Activated naive CD4-positive, alpha-beta T cell treated with anti-CD3 and anti-CD28 coated beads, Interleukin-2, amount 10 ng/mL, durations not matched to agents 7 days and 5 days (primary cell): ENCODE measurements at regions of chr20 and their contacts with region 1.

Region 1: DNA sequence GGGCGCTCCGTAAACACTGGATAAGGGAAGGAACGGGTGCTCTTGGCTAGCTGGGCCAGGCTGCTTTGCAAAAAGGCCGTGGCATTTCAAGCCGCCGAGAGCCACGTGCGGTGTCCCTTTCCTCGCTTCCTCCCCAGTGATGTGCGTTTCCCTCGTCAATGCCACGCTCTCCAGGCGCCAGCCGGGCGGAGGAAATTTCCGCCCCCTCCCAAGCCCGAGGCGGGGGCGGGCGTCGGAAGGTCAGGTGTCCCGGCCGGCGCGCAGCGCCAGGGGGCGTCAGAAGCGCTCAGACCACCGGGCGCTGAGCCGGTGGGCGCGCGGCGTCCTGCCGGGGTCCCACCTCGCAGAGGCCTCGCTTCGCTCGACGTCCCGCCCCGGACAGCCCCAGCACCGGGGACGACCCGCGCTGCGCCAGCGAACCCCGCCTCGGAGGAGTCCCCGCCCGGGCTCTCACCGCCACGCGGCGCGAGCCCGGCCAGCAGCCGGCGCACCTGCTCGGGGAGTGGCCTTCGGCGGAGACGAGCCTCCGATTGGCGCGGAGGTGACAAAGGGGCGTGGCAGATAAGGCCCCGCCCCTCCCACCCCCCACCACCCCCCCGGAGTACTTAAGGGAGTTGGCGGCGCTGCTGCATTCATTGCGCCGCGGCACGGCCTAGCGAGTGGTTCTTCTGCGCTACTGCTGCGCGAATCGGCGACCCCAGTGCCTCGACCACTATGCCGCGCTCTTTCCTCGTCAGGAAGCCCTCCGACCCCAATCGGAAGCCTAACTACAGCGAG is at the start of gene SNAI1:
- DNase-seq: peak; percentile 88
- H3K4me3 Mint-ChIP-seq: peak within 1 kb of the TSS; percentile 44
- H3K27ac Mint-ChIP-seq: no peak within 1 kb of the TSS
- H3K4me1 Mint-ChIP-seq: peaks cover 30% of the 10 kb centered on the region
- H3K27me3 Mint-ChIP-seq: peaks cover 69% of the 10 kb centered on the region

Region 2: GRCh38 chr20:49964964-49965780 is 17.4 kb before region 1 on chr20:
- CTCF ChIA-PET with region 1: interaction called, 15 read pairs
- DNase-seq: peak; percentile 43
- H3K4me3 Mint-ChIP-seq: no peak overlapping the region
- H3K27ac Mint-ChIP-seq: no peak overlapping the region
- H3K4me1 Mint-ChIP-seq: no peaks in the 10 kb centered on the region
- H3K27me3 Mint-ChIP-seq: no peaks in the 10 kb centered on the region

Region 3: GRCh38 chr20:50061742-50062516 is 79.4 kb after region 1 on chr20:
- CTCF ChIA-PET with region 1: interaction called, 317 read pairs
- DNase-seq: no peak
- H3K4me3 Mint-ChIP-seq: no peak overlapping the region
- H3K27ac Mint-ChIP-seq: no peak overlapping the region
- H3K4me1 Mint-ChIP-seq: no peaks in the 10 kb centered on the region
- H3K27me3 Mint-ChIP-seq: no peaks in the 10 kb centered on the region

Region 4: GRCh38 chr20:50070991-50071888 is 88.7 kb after region 1 on chr20:
- CTCF ChIA-PET with region 1: interaction called, 317 read pairs
- DNase-seq: peak; percentile 92
- H3K4me3 Mint-ChIP-seq: peak overlapping the region; percentile 44
- H3K27ac Mint-ChIP-seq: no peak overlapping the region
- H3K4me1 Mint-ChIP-seq: peaks cover 6% of the 10 kb centered on the region
- H3K27me3 Mint-ChIP-seq: peaks cover 21% of the 10 kb centered on the region

Region 5: DNA sequence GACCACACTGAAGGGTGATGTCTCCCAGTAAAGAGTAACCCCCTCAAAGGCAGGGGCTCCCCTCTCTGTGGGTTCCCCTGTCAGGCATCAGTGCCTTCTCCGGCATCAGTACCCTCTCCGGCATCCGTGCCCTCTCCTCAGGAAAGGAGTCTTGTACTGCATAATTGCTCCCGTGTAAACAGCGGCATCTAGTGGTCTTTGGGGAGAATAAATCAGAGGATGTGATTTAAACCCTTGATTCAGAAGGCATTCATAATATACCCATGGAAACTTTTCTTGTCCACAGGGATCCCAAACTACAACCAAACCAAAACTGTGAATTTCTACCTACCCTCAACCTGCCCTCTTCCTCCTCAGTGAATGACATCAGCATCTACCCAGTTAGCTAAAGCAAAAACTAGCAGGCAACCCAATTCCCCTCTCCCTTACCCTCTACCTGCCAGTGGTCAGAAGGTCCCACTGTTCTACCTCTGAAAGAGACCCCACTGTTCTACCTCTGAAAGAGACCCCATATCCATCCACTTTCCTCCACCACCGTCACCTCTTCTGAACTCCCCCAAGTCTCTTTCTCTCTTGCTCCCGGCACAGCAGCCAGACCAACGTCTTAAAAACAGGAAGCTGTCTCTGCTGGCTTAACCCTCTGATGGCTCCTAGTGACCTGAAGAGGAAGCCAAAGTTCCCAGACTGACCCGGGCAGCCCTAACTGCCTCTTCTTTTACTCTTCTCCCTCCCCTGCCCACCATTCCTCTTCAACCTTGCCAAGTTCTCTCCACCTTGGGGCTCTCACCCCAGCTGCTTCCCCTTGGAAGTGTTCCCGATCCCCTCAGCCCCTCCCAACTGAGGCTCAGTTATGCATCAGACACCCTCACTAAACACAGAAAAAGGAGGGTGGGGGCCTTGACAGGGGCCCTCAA is 103.2 kb after region 1 on chr20:
- CTCF ChIA-PET with region 1: interaction called, 17 read pairs
- DNase-seq: peak; percentile 55
- H3K4me3 Mint-ChIP-seq: peak overlapping the region; percentile 53
- H3K27ac Mint-ChIP-seq: peak overlapping the region; percentile 39
- H3K4me1 Mint-ChIP-seq: peaks cover 16% of the 10 kb centered on the region
- H3K27me3 Mint-ChIP-seq: no peaks in the 10 kb centered on the region

Region 6: GRCh38 chr20:50165684-50166554 is 183.4 kb after region 1 on chr20:
- CTCF ChIA-PET with region 1: interaction called, 33 read pairs
- DNase-seq: peak; percentile 80
- H3K4me3 Mint-ChIP-seq: peak overlapping the region; percentile 55
- H3K27ac Mint-ChIP-seq: peak overlapping the region; percentile 74
- H3K4me1 Mint-ChIP-seq: peaks cover 14% of the 10 kb centered on the region
- H3K27me3 Mint-ChIP-seq: peaks cover 5% of the 10 kb centered on the region

Region 7: DNA sequence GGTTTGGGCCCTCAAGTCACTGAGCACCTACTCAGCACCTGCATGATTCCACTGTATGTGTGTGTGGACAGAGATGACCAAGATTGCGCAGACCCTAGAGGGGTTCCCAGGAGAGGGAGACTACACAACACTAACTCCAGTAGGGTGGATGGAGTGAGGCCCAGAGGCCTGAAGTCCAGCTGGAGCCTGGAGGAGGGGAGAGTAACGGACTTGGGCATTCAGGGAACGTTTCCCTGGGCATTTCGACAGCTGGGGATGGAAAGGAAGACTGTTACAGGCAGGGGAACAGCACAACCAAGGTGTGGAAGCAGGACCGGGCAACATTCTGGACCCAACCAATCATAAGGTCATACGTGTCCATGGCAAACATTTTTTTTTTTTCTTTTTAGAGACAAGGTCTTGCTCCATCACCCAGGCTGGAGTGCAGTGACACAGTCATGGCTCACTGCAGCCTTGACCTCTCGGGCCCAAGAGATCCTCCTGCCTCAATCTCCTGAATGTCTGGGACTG is 197.0 kb after region 1 on chr20:
- CTCF ChIA-PET with region 1: interaction called, 13 read pairs
- DNase-seq: no peak
- H3K4me3 Mint-ChIP-seq: no peak overlapping the region
- H3K27ac Mint-ChIP-seq: no peak overlapping the region
- H3K4me1 Mint-ChIP-seq: no peaks in the 10 kb centered on the region
- H3K27me3 Mint-ChIP-seq: peaks cover 17% of the 10 kb centered on the region